ENCODE measurements at regions of chr6 and their contacts with region 1.

Region 1: DNA sequence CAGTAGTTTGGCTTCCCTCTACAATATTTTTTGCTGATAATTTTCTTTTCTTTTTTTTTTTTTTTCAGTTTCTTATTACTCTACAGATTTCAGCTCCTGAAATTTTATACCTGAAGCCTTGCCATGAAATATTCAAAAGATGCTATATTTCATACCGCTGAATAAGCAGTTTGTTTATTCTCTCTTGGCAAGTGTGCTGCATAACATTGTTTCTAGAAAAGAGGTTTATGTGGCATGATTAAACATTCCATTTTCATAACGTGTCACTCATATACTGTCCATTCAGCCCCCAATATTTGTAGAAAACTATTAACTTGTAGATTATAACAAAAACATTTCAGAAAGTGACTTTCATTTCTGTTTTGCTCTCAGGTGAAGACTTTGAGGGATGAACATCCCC is 174.4 kb upstream of the NOX3 start:
- DNase-seq: no peak
- H3K4me3 ChIP-seq: no peak overlapping the region
- H3K27ac ChIP-seq: no peak overlapping the region
- H3K4me1 ChIP-seq: no peaks in the 10 kb centered on the region
- H3K27me3 ChIP-seq: no peaks in the 10 kb centered on the region
- CTCF ChIP-seq: no peak
- POLR2A ChIP-seq: no peak

Region 2: GRCh38 chr6:155449450-155450239 is 180.4 kb before region 1 on chr6:
- intact Hi-C with region 1: no loop called
- DNase-seq: no peak
- H3K4me3 ChIP-seq: no peak overlapping the region
- H3K27ac ChIP-seq: no peak overlapping the region
- H3K4me1 ChIP-seq: no peaks in the 10 kb centered on the region
- H3K27me3 ChIP-seq: peaks cover 0 to 4% of the 10 kb centered on the region in 2 donors
- CTCF ChIP-seq: no peak
- POLR2A ChIP-seq: no peak

Region 3: DNA sequence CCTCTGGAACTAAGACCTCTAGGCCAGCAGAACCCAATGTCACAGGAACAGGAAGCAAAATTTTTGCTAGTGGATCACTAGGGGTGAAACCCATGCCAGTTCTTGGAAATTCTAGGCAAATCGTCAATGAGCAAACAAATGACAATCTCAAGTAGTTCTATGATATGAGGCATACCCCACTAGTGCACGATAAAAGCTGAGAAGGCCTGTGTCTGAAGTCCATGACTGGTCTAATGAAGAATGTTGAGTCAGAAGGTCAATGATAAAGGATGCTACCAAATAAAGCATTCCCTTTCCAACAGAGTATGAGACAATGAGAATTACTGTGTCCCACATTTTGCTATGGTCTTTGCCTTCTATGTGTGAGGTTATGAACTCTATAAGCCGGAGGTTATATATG is 25.1 kb before region 1 on chr6:
- intact Hi-C with region 1: no loop called
- DNase-seq: no peak
- H3K4me3 ChIP-seq: no peak overlapping the region
- H3K27ac ChIP-seq: no peak overlapping the region
- H3K4me1 ChIP-seq: no peaks in the 10 kb centered on the region
- H3K27me3 ChIP-seq: no peaks in the 10 kb centered on the region
- CTCF ChIP-seq: no peak
- POLR2A ChIP-seq: no peak

Region 4: GRCh38 chr6:156280065-156280464 is 650.0 kb after region 1 on chr6:
- intact Hi-C with region 1: loop called (anchors 5 kb)
- DNase-seq: no peak
- H3K4me3 ChIP-seq: no peak overlapping the region
- H3K27ac ChIP-seq: no peak overlapping the region
- H3K4me1 ChIP-seq: no peaks in the 10 kb centered on the region
- H3K27me3 ChIP-seq: no peaks in the 10 kb centered on the region
- CTCF ChIP-seq: no peak
- POLR2A ChIP-seq: no peak